T-cell (primary cell): ENCODE measurements at regions of chr1 and their contacts with region 1.

Region 1: GRCh38 chr1:45945426-45945825 is 142.0 kb downstream of the MAST2 start:
- DNase-seq: no peak
- ATAC-seq: no peak
- H3K4me3 ChIP-seq: no peak overlapping the region
- H3K4me3 Mint-ChIP-seq: no peak overlapping the region
- H3K27ac ChIP-seq: no peak overlapping the region
- H3K27ac Mint-ChIP-seq: no peak overlapping the region
- H3K4me1 ChIP-seq: no peaks in the 10 kb centered on the region
- H3K4me1 Mint-ChIP-seq: no peaks in the 10 kb centered on the region
- H3K27me3 ChIP-seq: no peaks in the 10 kb centered on the region
- H3K27me3 Mint-ChIP-seq: peaks cover 0 to 3% of the 10 kb centered on the region in 2 donors

Region 2: GRCh38 chr1:45968941-45969666 is 23.7 kb after region 1 on chr1:
- CTCF ChIA-PET with region 1: no interaction called
- POLR2A ChIA-PET with region 1: no interaction called
- DNase-seq: no peak
- ATAC-seq: no peak
- H3K4me3 ChIP-seq: no peak overlapping the region
- H3K4me3 Mint-ChIP-seq: no peak overlapping the region
- H3K27ac ChIP-seq: no peak overlapping the region
- H3K27ac Mint-ChIP-seq: no peak overlapping the region
- H3K4me1 ChIP-seq: no peaks in the 10 kb centered on the region
- H3K4me1 Mint-ChIP-seq: no peaks in the 10 kb centered on the region
- H3K27me3 ChIP-seq: no peaks in the 10 kb centered on the region
- H3K27me3 Mint-ChIP-seq: no peaks in the 10 kb centered on the region

Region 3: GRCh38 chr1:46370214-46370633 is 424.8 kb after region 1 on chr1:
- CTCF ChIA-PET with region 1: no interaction called
- POLR2A ChIA-PET with region 1: interaction called in 1 of 2 experiments, 11 read pairs
- DNase-seq: no peak
- ATAC-seq: no peak
- H3K4me3 ChIP-seq: no peak overlapping the region
- H3K4me3 Mint-ChIP-seq: no peak overlapping the region
- H3K27ac ChIP-seq: no peak overlapping the region
- H3K27ac Mint-ChIP-seq: no peak overlapping the region
- H3K4me1 ChIP-seq: no peaks in the 10 kb centered on the region
- H3K4me1 Mint-ChIP-seq: no peaks in the 10 kb centered on the region
- H3K27me3 ChIP-seq: no peaks in the 10 kb centered on the region
- H3K27me3 Mint-ChIP-seq: no peaks in the 10 kb centered on the region